Ovary (tissue), 10 donors: ENCODE measurements at regions of chr3 and their contacts with region 1.

Region 1: GRCh38 chr3:189148081-189148507 is 23.7 kb upstream of the TPRG1 start:
- DNase-seq: peak; percentile 55 to 83 (median 71)
- H3K4me3 ChIP-seq: no peak overlapping the region
- H3K27ac ChIP-seq: no peak overlapping the region
- H3K4me1 ChIP-seq: peaks cover 4% of the 10 kb centered on the region
- H3K27me3 ChIP-seq: no peaks in the 10 kb centered on the region
- CTCF ChIP-seq: peak; percentile 71 to 90 (median 86)
- EP300 ChIP-seq: no peak
- POLR2A ChIP-seq: no peak

Region 2: DNA sequence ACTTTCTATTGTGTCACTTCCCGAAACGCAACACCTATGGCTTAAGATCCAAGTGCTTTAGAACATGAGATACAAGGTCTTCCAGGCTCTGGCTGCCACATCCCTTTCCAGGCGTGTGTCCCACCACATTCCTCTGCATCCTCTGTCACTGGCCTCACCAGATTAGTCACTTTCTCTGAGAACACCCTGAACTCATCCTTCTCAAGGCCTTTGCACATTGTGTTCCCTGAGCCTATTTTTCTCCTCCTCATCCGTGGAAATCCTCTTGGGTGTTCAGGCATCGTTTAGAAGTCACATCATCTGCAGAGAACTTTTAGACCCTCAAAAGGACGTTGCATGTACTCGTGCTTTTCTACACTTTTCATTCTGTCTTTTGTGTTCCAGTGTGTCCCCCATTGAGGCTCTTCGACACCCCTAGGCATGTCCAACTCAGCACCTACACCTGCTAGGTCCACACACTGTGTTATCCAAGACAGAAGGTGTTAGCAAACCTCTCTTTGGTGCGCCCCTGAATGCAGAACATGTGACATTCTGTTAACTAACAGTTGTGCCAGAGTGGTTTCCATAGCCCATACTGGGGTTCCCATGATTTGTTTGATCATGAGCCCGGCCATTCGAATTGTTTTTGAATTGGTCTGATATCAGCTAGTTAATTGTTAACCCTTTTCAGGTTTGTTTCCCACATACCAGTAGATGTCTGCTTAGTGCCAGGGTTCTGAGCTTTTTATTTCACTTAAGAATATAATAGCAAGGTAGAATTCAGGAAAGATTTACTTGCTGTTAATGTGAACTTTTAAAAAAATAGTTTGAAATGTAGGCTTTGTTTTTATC is 926.9 kb before region 1 on chr3:
- intact Hi-C with region 1: no loop called
- DNase-seq: peak in 1 of 5 donors; percentile 51
- H3K4me3 ChIP-seq: no peak overlapping the region
- H3K27ac ChIP-seq: no peak overlapping the region
- H3K4me1 ChIP-seq: peaks cover 18% of the 10 kb centered on the region
- H3K27me3 ChIP-seq: no peaks in the 10 kb centered on the region
- CTCF ChIP-seq: no peak
- EP300 ChIP-seq: peak; percentile 99
- POLR2A ChIP-seq: no peak

Region 3: DNA sequence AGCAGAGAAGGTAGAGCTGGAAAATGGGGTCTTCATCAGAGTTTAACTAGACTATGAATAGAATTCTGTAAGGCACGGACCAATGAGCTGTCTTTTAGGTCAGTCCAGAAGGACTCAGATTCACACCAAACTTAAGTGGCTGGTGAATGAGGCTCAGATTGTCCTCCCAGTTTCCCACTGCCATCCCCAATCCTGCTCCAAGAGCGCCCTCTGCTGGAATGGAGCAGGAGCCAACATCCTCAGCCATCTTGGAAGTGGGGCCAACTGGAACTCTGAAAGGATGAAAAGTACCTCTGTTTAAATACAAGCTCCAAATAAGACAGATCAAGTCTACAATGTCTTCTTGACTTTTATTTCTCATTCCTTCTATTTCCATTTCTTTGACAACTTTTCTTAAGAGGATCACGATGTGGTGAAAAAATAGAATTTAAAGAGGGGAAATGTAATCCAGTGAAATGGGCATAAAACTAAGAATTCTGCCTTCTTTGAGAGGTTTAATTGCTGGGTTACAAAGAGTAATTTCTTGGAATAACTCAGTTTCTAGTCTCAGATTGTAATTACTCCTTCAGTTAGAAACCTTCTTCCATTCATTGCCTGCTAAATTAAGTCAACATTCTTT is 193.4 kb before region 1 on chr3:
- intact Hi-C with region 1: loop called in 2 of 4 experiments (anchors 5 kb)
- DNase-seq: peak; percentile 85 to 92 (median 87)
- H3K4me3 ChIP-seq: no peak overlapping the region
- H3K27ac ChIP-seq: no peak overlapping the region
- H3K4me1 ChIP-seq: peaks cover 8% of the 10 kb centered on the region
- H3K27me3 ChIP-seq: no peaks in the 10 kb centered on the region
- CTCF ChIP-seq: peak; percentile 73 to 96 (median 90)
- EP300 ChIP-seq: no peak
- POLR2A ChIP-seq: no peak

Region 4: GRCh38 chr3:188978421-188979171 is 169.5 kb before region 1 on chr3:
- intact Hi-C with region 1: loop called in 3 of 4 experiments (anchors 5 to 10 kb)
- DNase-seq: peak; percentile 68 to 76 (median 75)
- H3K4me3 ChIP-seq: no peak overlapping the region
- H3K27ac ChIP-seq: peak overlapping the region; percentile 6 to 65
- H3K4me1 ChIP-seq: peaks cover 16% of the 10 kb centered on the region
- H3K27me3 ChIP-seq: no peaks in the 10 kb centered on the region
- CTCF ChIP-seq: no peak
- EP300 ChIP-seq: no peak
- POLR2A ChIP-seq: no peak

Region 5: GRCh38 chr3:189099031-189099471 is 49.0 kb before region 1 on chr3:
- intact Hi-C with region 1: loop called in 1 of 4 experiments (anchors 10 kb)
- DNase-seq: peak; percentile 89 to 94 (median 91)
- H3K4me3 ChIP-seq: peak overlapping the region; percentile 3
- H3K27ac ChIP-seq: peak overlapping the region; percentile 1 to 81
- H3K4me1 ChIP-seq: peaks cover 10% of the 10 kb centered on the region
- H3K27me3 ChIP-seq: no peaks in the 10 kb centered on the region
- CTCF ChIP-seq: no peak
- EP300 ChIP-seq: peak; percentile 67
- POLR2A ChIP-seq: no peak

Region 6: GRCh38 chr3:189404797-189405484 is 256.8 kb after region 1 on chr3:
- intact Hi-C with region 1: no loop called
- DNase-seq: no peak
- H3K4me3 ChIP-seq: no peak overlapping the region
- H3K27ac ChIP-seq: no peak overlapping the region
- H3K4me1 ChIP-seq: no peaks in the 10 kb centered on the region
- H3K27me3 ChIP-seq: no peaks in the 10 kb centered on the region
- CTCF ChIP-seq: no peak
- EP300 ChIP-seq: no peak
- POLR2A ChIP-seq: no peak